CD8-positive, alpha-beta memory T cell (primary cell): ENCODE measurements at regions of chr1 and their contacts with region 1.

Region 1: DNA sequence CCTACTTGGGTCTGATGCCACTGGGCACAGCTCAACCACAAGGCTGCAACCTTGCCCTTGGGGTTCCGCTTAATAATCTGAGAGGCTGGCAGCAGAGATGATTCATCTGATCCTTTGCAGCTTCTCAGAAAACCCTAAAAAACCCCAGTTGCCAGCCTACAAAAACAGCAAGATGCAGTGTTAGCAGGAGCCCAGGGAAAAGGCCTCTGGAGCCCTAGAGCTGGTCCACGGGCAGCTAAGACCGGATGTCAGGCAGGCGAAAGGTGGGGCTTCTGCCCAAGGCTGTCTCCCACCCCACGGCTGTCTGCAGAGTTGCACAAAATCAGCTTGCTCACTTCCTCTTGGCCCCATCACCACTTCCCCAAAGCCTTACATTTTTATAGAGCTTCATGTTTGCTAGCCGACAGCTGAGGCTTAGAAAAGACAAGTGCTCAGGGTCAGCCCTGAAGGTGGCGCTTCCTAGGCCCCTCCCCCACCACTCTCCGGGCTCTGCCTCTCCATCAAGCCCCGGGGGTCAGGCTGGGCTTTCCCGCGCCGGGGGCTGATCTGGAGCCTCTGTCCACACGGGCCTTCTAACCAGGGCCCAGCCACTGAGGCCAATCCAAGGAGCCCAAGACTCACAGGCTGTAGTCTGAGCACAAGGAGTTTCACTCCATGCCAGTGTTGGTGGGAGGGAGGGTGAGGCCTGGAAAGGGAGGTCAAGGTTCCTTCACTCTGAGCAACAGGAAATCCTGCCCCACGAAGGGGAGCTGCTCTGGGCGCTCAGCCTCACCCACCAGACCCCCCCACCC is 4.2 kb upstream of the ADORA3 start:
- DNase-seq: peak; percentile 43 to 72 (median 52)
- H3K4me3 ChIP-seq: peak overlapping the region; percentile 68
- H3K4me3 Mint-ChIP-seq: peak overlapping the region; percentile 22 to 88 (median 83)
- H3K27ac ChIP-seq: peak overlapping the region; percentile 87
- H3K27ac Mint-ChIP-seq: peak overlapping the region; percentile 74 to 99 (median 96)
- H3K4me1 ChIP-seq: peaks cover 88% of the 10 kb centered on the region
- H3K4me1 Mint-ChIP-seq: peaks cover 57 to 61% (median 60%) of the 10 kb centered on the region in 3 donors
- H3K27me3 ChIP-seq: no peaks in the 10 kb centered on the region
- H3K27me3 Mint-ChIP-seq: no peaks in the 10 kb centered on the region

Region 2: DNA sequence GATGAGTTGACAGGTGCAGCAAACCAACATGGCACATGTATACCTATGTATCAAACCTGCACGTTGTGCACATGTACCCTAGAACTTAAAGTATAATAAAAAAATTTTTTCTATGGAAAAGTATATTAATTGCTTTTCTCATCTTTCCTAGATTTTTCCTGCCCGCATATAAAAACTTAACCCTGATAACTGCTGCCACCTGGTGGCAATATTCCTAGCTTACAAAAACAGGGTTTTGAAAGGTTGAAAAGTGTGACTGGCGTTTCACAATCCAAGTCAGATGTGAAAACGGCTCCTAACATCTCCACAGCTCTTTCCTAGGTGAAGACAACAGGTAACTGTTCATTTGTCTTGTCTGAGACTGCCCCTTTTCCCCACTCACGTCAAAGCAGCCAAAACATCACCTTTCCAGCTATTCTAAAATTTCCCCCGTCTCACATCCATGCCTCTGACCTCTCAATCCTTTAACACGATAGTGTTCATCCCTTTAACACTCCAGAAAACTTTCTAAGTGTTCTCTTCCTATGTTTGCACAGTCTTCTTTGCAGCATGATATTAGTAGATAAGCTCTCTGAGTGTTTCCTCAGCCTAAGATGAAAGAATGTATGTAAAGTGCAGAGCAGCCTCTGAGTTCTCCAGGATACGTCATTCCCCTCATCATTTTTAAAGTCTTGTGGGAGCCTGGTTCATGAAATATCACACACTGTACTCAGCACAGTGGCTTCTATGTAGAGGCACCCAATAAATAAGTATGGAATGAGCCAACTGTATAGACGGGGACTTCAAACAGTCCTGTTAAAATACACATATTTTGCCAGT is 107.6 kb before region 1 on chr1:
- CTCF ChIA-PET with region 1: no interaction called
- POLR2A ChIA-PET with region 1: no interaction called
- DNase-seq: peak in 4 of 5 donors; percentile 15 to 37 (median 26)
- H3K4me3 ChIP-seq: no peak overlapping the region
- H3K4me3 Mint-ChIP-seq: no peak overlapping the region
- H3K27ac ChIP-seq: no peak overlapping the region
- H3K27ac Mint-ChIP-seq: no peak overlapping the region
- H3K4me1 ChIP-seq: no peaks in the 10 kb centered on the region
- H3K4me1 Mint-ChIP-seq: peaks cover 9 to 26% (median 10%) of the 10 kb centered on the region in 3 donors
- H3K27me3 ChIP-seq: no peaks in the 10 kb centered on the region
- H3K27me3 Mint-ChIP-seq: peaks cover 2 to 10% of the 10 kb centered on the region in 2 donors

Region 3: DNA sequence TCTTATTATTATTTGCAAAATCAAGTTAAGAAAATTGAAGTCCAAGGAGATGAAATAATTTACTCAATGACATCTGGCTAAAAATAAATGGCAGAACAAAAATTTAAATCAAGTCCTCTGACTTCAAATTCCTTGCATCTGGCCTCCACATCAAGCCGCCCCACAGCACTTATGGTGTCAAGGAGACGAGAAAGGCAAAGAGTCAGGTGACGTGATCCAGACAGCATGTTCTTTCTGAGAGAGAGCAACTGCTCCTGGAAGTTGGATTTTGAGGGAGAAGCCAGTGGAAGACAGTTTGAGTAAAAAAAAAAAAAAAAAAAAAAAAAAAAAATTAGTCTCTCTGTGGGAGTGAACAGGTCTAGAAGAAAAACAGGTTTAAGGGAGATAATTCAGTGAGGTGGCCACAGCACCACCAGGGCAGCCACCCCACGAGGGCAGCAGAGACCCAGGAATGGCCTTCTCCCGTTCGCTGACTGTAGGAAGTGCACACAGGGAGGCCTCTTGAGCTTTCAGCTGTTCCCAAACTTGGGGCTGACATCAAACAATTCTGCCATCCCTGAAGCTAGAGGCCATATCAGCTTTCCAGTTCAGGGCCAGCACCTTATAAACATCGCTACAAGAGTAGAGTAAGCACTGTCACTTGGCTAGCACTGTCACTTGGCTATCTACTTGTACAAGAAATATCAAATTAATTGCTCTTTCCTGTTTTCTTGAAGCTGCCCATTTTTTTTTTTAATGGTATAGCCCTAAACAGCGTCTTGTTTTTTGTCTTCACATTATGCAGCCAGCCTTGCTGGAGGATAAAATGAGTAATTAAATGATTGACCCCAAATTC is 26.0 kb before region 1 on chr1:
- CTCF ChIA-PET with region 1: interaction called, 33 read pairs
- POLR2A ChIA-PET with region 1: interaction called, 5 read pairs
- DNase-seq: peak in 4 of 5 donors; percentile 17 to 61 (median 36)
- H3K4me3 ChIP-seq: no peak overlapping the region
- H3K4me3 Mint-ChIP-seq: no peak overlapping the region
- H3K27ac ChIP-seq: no peak overlapping the region
- H3K27ac Mint-ChIP-seq: no peak overlapping the region
- H3K4me1 ChIP-seq: peaks cover 26% of the 10 kb centered on the region
- H3K4me1 Mint-ChIP-seq: peaks cover 31 to 43% (median 36%) of the 10 kb centered on the region in 3 donors
- H3K27me3 ChIP-seq: no peaks in the 10 kb centered on the region
- H3K27me3 Mint-ChIP-seq: no peaks in the 10 kb centered on the region

Region 4: GRCh38 chr1:111592389-111593361 is 85.1 kb after region 1 on chr1:
- CTCF ChIA-PET with region 1: interaction called, 15 read pairs
- POLR2A ChIA-PET with region 1: interaction called, 5 read pairs
- DNase-seq: peak; percentile 61 to 96 (median 83)
- H3K4me3 ChIP-seq: peak overlapping the region; percentile 17
- H3K4me3 Mint-ChIP-seq: peak overlapping the region; percentile 50 to 74 (median 66)
- H3K27ac ChIP-seq: peak overlapping the region; percentile 38
- H3K27ac Mint-ChIP-seq: peak overlapping the region; percentile 74 to 97 (median 88)
- H3K4me1 ChIP-seq: peaks cover 70% of the 10 kb centered on the region
- H3K4me1 Mint-ChIP-seq: peaks cover 56 to 69% (median 64%) of the 10 kb centered on the region in 3 donors
- H3K27me3 ChIP-seq: no peaks in the 10 kb centered on the region
- H3K27me3 Mint-ChIP-seq: no peaks in the 10 kb centered on the region

Region 5: DNA sequence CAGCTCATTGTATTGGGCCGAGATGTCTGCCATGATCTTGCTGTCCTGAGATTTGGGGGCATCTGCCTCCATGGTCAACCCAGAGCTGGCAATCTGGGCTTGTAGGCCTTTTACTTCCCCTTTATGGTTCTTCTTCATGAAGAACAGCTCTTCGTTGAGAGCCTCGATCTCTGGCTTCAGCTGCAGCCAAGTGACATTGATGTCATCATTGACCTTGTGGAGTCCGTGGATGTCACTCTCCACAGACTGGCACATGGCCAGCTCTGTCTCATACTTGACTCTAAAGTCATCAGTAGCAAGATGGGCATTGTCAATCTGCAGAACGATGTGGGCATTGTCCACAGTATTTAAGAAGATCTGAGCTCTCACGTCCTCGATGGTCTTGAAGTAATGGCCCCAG is 141.2 kb after region 1 on chr1:
- CTCF ChIA-PET with region 1: interaction called, 23 read pairs
- POLR2A ChIA-PET with region 1: no interaction called
- DNase-seq: no peak
- H3K4me3 ChIP-seq: no peak overlapping the region
- H3K4me3 Mint-ChIP-seq: peak overlapping the region in 4 of 7 donors; percentile 17 to 82 (median 48)
- H3K27ac ChIP-seq: no peak overlapping the region
- H3K27ac Mint-ChIP-seq: peak overlapping the region in 7 of 8 donors; percentile 24 to 88 (median 72)
- H3K4me1 ChIP-seq: peaks cover 75% of the 10 kb centered on the region
- H3K4me1 Mint-ChIP-seq: peaks cover 70 to 96% (median 93%) of the 10 kb centered on the region in 3 donors
- H3K27me3 ChIP-seq: no peaks in the 10 kb centered on the region
- H3K27me3 Mint-ChIP-seq: no peaks in the 10 kb centered on the region

Region 6: GRCh38 chr1:111699268-111699667 is 191.7 kb after region 1 on chr1:
- CTCF ChIA-PET with region 1: interaction called, 16 read pairs
- POLR2A ChIA-PET with region 1: interaction called, 4 read pairs
- DNase-seq: no peak
- H3K4me3 ChIP-seq: no peak overlapping the region
- H3K4me3 Mint-ChIP-seq: no peak overlapping the region
- H3K27ac ChIP-seq: no peak overlapping the region
- H3K27ac Mint-ChIP-seq: peak overlapping the region in 4 of 8 donors; percentile 1 to 78 (median 36)
- H3K4me1 ChIP-seq: no peaks in the 10 kb centered on the region
- H3K4me1 Mint-ChIP-seq: peaks cover 26 to 34% (median 29%) of the 10 kb centered on the region in 3 donors
- H3K27me3 ChIP-seq: no peaks in the 10 kb centered on the region
- H3K27me3 Mint-ChIP-seq: no peaks in the 10 kb centered on the region

Region 7: DNA sequence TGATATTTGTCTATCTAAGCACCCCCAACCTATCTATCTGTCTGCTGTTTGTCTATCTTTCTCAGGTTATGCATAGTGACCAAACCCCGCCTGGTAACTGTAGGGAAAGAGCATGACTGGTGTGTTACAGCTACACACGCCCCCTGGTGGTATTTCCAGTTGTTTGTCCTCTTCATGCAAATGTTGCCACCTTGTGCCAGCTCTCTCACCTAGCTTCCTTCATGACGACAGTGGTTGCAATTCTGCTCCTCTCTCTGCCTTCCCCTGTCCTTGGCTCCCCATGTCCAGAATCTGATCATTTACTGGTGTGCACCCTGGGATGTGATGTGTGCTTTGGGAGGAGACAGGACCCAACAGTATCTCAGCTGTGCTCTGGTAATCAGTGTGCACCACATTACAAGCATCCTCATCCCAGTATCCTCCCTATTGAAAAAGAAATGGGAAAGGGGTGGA is 239.7 kb after region 1 on chr1:
- CTCF ChIA-PET with region 1: interaction called, 15 read pairs
- POLR2A ChIA-PET with region 1: interaction called, 3 read pairs
- DNase-seq: peak; percentile 23 to 57 (median 39)
- H3K4me3 ChIP-seq: no peak overlapping the region
- H3K4me3 Mint-ChIP-seq: no peak overlapping the region
- H3K27ac ChIP-seq: no peak overlapping the region
- H3K27ac Mint-ChIP-seq: peak overlapping the region in 1 of 8 donors; percentile 14
- H3K4me1 ChIP-seq: no peaks in the 10 kb centered on the region
- H3K4me1 Mint-ChIP-seq: no peaks in the 10 kb centered on the region
- H3K27me3 ChIP-seq: no peaks in the 10 kb centered on the region
- H3K27me3 Mint-ChIP-seq: peaks cover 3% of the 10 kb centered on the region in 2 donors